ENCODE measurements at regions of chr6 and their contacts with region 1.

Region 1: DNA sequence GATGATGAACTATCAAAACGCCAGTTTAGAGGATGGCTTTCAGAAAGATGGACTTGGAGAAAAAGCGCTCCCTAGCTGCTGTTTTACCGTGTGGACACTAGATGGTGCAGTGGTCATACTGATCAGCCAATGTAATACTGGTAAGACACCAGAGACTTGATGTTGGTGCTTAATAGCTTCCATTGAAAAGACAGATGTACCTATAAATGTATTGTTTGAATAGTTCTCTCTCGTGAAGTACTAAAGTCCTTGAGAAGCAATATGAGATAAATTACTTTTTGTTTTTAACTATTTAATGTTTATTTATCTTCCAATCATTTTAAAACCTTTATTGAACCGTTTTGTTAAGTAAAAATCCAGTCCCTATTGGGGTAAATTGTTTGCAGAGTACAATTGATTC is 63.9 kb upstream of the FUCA2 start:
- DNase-seq: peak; percentile 61
- ATAC-seq: peak; percentile 98
- H3K4me3 Mint-ChIP-seq: no peak overlapping the region
- H3K27ac Mint-ChIP-seq: no peak overlapping the region
- H3K4me1 Mint-ChIP-seq: peaks cover 5% of the 10 kb centered on the region
- H3K27me3 Mint-ChIP-seq: no peaks in the 10 kb centered on the region
- CTCF ChIP-seq: peak; percentile 86

Region 2: GRCh38 chr6:143328885-143329284 is 246.6 kb before region 1 on chr6:
- CTCF ChIA-PET with region 1: no interaction called
- POLR2A ChIA-PET with region 1: no interaction called
- intact Hi-C with region 1: no loop called
- DNase-seq: no peak
- ATAC-seq: no peak
- H3K4me3 Mint-ChIP-seq: no peak overlapping the region
- H3K27ac Mint-ChIP-seq: no peak overlapping the region
- H3K4me1 Mint-ChIP-seq: no peaks in the 10 kb centered on the region
- H3K27me3 Mint-ChIP-seq: no peaks in the 10 kb centered on the region
- CTCF ChIP-seq: no peak

Region 3: DNA sequence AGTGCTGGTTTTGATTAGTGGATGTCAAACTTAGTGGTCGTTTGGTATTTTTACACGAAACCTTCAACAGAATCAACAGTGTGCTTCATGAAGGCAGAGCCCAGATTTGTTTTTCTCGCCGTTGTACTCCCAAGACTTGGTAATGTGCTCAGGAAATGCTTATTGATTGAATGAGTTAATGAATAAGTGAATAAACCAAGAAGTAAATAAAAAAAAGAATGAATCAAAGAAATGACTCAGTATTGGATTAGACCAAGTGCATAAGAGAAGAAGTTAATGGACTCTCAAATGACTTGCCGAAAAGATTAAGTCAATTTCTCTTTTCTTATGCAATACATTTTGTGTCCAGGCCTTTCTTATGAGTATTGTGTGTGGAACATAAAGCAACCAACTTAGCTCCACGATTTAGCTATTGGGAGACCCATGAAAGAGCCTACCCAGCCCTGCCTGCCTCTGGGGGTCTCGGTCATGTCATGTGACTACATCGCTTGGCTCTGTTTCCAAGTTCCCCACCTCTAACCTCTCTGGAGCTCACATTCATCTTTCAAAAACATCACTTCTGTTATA is 53.3 kb before region 1 on chr6:
- CTCF ChIA-PET with region 1: no interaction called
- POLR2A ChIA-PET with region 1: no interaction called
- intact Hi-C with region 1: no loop called
- DNase-seq: no peak
- ATAC-seq: no peak
- H3K4me3 Mint-ChIP-seq: no peak overlapping the region
- H3K27ac Mint-ChIP-seq: no peak overlapping the region
- H3K4me1 Mint-ChIP-seq: no peaks in the 10 kb centered on the region
- H3K27me3 Mint-ChIP-seq: no peaks in the 10 kb centered on the region
- CTCF ChIP-seq: no peak

Region 4: DNA sequence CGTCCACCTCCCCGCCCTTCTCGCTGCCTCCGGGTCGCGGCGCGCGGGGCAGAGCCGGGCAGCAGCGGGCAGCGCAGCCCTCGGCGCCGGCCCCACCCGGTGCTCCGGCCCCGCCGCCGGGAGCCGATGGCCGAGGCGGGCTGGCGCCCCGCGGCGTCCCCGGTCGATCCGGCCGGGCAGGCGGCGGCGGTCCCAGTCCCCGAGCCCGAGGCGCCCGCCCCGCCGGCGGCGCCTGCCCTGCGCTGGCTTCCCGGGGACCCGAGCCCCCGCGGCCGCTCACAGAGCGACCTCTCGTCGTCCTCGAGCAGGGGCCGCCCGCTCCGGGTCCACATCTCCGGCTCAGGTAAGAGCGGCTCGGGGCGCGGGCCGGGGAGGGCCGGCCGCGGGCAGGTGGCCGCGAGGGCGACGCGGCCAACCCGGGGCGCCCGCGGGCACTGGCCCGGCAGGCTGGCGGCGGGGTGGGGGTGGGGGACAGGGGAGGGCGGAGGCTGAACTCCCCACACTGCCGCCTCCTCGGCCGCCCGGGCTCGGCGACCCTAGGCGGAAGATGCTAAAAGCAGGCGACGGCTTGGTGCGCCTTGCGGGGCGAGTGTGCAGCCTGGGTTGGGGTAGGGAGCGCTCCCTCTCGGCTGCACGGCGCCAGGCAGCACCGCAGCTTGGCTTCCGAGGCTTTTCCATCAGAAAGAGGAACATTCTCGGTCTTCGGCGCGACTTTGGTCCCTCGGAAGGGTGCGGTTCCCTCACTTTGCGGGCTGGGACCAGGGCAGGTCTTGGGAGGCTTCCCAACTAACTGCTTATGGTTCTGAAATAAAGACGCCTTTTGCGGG is 38.4 kb before region 1 on chr6:
- CTCF ChIA-PET with region 1: interaction called, 10 read pairs
- POLR2A ChIA-PET with region 1: interaction called, 3 read pairs
- intact Hi-C with region 1: no loop called
- DNase-seq: peak; percentile 72
- ATAC-seq: peak; percentile 79
- H3K4me3 Mint-ChIP-seq: peak overlapping the region; percentile 80
- H3K27ac Mint-ChIP-seq: peak overlapping the region; percentile 67
- H3K4me1 Mint-ChIP-seq: peaks cover 25% of the 10 kb centered on the region
- H3K27me3 Mint-ChIP-seq: no peaks in the 10 kb centered on the region
- CTCF ChIP-seq: no peak

Region 5: GRCh38 chr6:143806282-143807102 is 231.1 kb after region 1 on chr6:
- CTCF ChIA-PET with region 1: interaction called, 10 read pairs
- POLR2A ChIA-PET with region 1: no interaction called
- intact Hi-C with region 1: no loop called
- DNase-seq: peak; percentile 97
- ATAC-seq: peak; percentile 75
- H3K4me3 Mint-ChIP-seq: peak overlapping the region; percentile 55
- H3K27ac Mint-ChIP-seq: peak overlapping the region; percentile 89
- H3K4me1 Mint-ChIP-seq: peaks cover 46% of the 10 kb centered on the region
- H3K27me3 Mint-ChIP-seq: no peaks in the 10 kb centered on the region
- CTCF ChIP-seq: no peak

Region 6: GRCh38 chr6:143842902-143843676 is 267.6 kb after region 1 on chr6 and contains the start of gene LTV1:
- CTCF ChIA-PET with region 1: interaction called, 18 read pairs
- POLR2A ChIA-PET with region 1: interaction called, 4 read pairs
- intact Hi-C with region 1: loop called (anchors 10 kb)
- DNase-seq: peak; percentile 97
- ATAC-seq: peak; percentile 97
- H3K4me3 Mint-ChIP-seq: peak within 1 kb of the TSS; percentile 98
- H3K27ac Mint-ChIP-seq: peak within 1 kb of the TSS; percentile 99
- H3K4me1 Mint-ChIP-seq: peaks cover 21% of the 10 kb centered on the region
- H3K27me3 Mint-ChIP-seq: no peaks in the 10 kb centered on the region
- CTCF ChIP-seq: no peak
- total RNA-seq, gene LTV1: 30.9 to 31.6 TPM

Measured in activated CD8-positive, alpha-beta T cell treated with anti-CD3 and anti-CD28 coated beads for 36 hours (primary cell).